H1 (cell line): ENCODE measurements at regions of chr1 and their contacts with region 1.

Region 1: DNA sequence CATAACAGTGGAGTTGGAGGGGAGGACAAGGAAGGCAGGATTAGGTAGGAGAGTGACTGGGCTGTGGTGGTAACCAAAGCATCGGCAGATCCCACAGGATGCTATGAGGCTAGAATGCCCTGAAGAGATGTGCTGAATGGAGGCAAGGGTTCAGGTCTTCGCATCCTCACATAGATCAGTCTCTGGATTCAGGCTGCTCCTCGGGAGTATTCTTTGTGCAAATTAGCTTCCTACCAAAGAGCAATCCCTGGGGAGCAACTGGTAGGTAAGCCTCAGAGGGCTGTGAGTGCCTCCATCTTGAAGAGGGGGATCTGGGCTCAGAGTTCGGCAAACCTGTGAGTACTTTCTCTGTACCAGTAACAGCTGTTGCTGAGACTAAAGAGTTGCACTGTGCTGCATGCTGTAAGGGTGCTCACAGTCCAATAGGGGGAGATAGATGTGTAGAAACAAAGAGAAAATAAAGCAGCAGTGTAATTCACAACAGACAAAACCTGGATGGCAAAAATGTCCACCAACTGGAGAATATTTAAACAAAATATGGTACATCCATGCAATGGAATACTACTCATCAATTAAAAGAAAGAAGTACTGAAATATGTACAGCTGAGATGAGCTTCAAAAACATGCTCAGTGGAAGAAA is 322.4 kb upstream of the DEPDC1 start:
- DNase-seq: peak in 1 of 2 experiments; percentile 1
- H3K4me3 ChIP-seq: no peak overlapping the region
- H3K27ac ChIP-seq: no peak overlapping the region
- H3K4me1 ChIP-seq: no peaks in the 10 kb centered on the region
- H3K27me3 ChIP-seq: no peaks in the 10 kb centered on the region
- CTCF ChIP-seq: peak in 2 of 3 experiments; percentile 49 to 68; a peak in 2 of 4 replicates
- EP300 ChIP-seq: no peak
- POLR2A ChIP-seq: no peak
- RAD21 ChIP-seq: peak; percentile 78 to 82

Region 2: DNA sequence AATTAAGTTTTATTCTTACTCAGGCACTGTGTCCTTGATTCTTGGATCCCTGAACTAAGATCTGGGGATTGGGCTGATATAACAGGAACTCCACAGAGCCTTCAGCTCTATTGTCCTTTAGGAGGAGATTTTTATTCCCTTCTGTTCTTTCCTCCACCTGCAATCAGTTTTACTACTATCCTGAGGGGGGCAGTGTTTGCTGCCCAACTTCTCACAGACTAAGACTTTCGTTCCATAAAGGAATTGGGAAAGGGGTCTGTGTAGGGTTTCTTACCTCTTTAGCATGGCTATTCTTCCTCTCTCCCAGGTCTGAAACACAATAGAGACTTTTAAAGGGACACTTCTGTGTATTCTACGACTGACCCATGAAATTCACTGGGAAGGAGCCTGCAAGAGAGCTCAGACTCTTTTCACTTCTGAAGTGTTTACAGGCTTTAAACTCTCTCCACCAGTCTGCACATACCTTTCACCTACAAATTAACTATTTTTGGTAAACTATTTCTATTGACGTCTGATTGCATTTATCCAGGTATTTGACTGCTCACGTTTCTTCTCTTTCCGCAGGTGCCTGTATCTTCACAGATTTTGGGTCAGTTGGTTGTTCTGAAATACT is 219.2 kb before region 1 on chr1:
- CTCF ChIA-PET with region 1: interaction called, 10 read pairs
- POLR2A ChIA-PET with region 1: no interaction called
- DNase-seq: peak in 1 of 2 experiments; percentile 21
- H3K4me3 ChIP-seq: no peak overlapping the region
- H3K27ac ChIP-seq: no peak overlapping the region
- H3K4me1 ChIP-seq: peaks cover 0 to 2% (median 0%) of the 10 kb centered on the region in 4 experiments; a peak in 2 of 7 replicates
- H3K27me3 ChIP-seq: no peaks in the 10 kb centered on the region
- CTCF ChIP-seq: peak in 2 of 3 experiments; percentile 68 to 69; a peak in 3 of 4 replicates
- EP300 ChIP-seq: no peak
- POLR2A ChIP-seq: no peak
- RAD21 ChIP-seq: peak; percentile 79 to 83

Region 3: GRCh38 chr1:68805097-68805641 is 14.1 kb before region 1 on chr1:
- CTCF ChIA-PET with region 1: interaction called, 21 read pairs
- POLR2A ChIA-PET with region 1: no interaction called
- DNase-seq: no peak
- H3K4me3 ChIP-seq: no peak overlapping the region
- H3K27ac ChIP-seq: no peak overlapping the region
- H3K4me1 ChIP-seq: no peaks in the 10 kb centered on the region
- H3K27me3 ChIP-seq: no peaks in the 10 kb centered on the region
- CTCF ChIP-seq: no peak
- EP300 ChIP-seq: no peak
- POLR2A ChIP-seq: no peak
- RAD21 ChIP-seq: no peak

Region 4: GRCh38 chr1:68975212-68975933 is 156.1 kb after region 1 on chr1:
- CTCF ChIA-PET with region 1: interaction called, 28 read pairs
- POLR2A ChIA-PET with region 1: no interaction called
- DNase-seq: no peak
- H3K4me3 ChIP-seq: no peak overlapping the region
- H3K27ac ChIP-seq: peak overlapping the region; percentile 78
- H3K4me1 ChIP-seq: peaks cover 2 to 17% (median 11%) of the 10 kb centered on the region in 4 experiments
- H3K27me3 ChIP-seq: no peaks in the 10 kb centered on the region
- CTCF ChIP-seq: no peak
- EP300 ChIP-seq: no peak
- POLR2A ChIP-seq: peak in 1 of 2 experiments; percentile 64; a peak in 2 of 3 replicates
- RAD21 ChIP-seq: no peak

Region 5: DNA sequence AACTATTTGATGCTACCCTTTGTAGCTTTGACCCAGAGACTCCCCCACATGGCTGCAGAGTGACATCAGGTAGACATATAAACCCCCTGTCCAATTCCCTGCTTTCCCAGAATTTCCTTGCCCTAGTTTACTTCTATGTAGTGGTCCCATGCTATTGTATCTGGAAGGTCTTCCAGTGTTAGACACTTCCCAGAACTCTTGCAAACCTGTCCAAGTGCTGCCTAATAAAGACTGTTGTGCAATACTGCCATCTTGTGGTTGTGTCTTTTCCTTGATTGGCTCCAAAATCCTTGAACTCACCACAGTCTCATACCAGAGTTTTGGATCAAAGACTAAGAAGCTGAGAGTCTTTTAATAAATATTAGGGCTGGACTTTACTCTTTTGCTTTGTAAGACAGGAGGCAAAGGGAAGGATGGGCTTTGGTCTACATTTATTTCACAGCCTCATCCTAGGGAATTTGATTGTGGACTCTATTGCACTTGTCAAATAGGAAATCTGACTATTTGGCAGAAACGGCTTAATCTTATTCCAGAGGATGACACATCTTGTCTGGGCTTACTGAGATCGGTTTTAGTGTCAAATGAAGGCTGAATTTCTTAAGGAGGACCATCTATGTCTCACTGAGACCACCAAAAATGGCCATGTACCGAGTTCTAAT is 918.3 kb after region 1 on chr1:
- CTCF ChIA-PET with region 1: interaction called, 11 read pairs
- POLR2A ChIA-PET with region 1: no interaction called
- DNase-seq: peak in 1 of 2 experiments; percentile 45
- H3K4me3 ChIP-seq: no peak overlapping the region
- H3K27ac ChIP-seq: no peak overlapping the region
- H3K4me1 ChIP-seq: peaks cover 0 to 7% (median 2%) of the 10 kb centered on the region in 4 experiments; a peak in 3 of 7 replicates
- H3K27me3 ChIP-seq: no peaks in the 10 kb centered on the region
- CTCF ChIP-seq: peak in 2 of 3 experiments; percentile 76 to 77; a peak in 3 of 4 replicates
- EP300 ChIP-seq: 0 out of 3 replicates have a peak, but pooled peaks of 1 of the 2 experiments have one; percentile 33
- POLR2A ChIP-seq: no peak
- RAD21 ChIP-seq: peak; percentile 96 to 97